Sciatic nerve (tissue), 2 donors: ENCODE measurements at regions of chr7 and their contacts with region 1.

Region 1: DNA sequence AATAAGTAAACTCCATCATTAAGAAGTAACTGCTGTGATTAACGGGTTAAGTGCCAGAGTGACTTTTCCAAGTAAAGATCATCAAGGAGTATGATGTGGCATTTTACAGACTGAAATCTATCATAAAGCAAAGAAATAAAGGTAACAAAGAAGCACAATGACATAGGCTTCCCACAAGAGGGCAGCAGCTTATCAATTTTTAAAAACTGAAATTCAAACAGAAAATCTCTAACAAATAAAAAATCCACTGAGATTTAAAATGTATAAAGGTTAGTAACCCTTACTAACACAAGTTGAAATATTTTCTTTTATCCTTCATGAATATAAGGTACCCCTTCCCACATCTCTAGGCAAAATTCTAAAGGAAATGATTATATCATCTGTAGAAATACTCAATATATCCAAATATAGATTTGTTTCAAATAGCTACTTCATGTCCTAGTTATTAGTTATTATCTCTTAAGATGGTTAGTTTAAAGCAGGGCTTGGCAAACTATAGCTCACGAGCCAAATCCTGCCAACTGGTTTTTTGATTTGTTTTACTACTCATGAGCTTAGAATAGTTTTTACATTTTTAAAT is 29.2 kb downstream of the FAM3C start:
- DNase-seq: no peak
- ATAC-seq: no peak

Region 2: DNA sequence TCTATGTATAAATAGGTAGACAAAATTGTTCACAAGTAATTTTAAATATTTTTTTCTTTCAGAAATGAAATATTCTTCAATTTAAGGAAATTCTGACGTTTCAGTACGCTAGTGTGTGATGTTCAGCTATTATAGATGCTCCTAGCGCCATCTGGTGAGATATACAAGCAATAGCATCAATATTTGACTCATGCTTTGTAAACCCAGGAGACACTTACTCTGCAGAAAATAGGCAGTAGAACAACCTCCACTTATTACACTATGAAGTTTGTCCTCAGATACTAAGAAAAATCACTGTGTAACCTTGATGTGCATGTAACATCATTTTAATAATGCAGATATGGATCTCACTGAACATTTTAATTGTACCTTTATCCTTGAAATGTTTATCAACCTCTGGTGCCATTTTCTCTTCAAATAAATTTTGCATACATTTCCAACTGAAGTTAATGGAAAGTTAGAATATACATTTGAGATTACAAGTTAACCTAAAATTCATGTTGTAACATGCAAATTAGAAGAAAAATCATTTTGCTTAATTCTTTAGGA is 180.7 kb after region 1 on chr7:
- intact Hi-C with region 1: loop called (anchors 2 kb)
- DNase-seq: no peak
- ATAC-seq: peak; percentile 86